Vagina (tissue), 2 donors: ENCODE measurements at regions of chr16 and their contacts with region 1.

Region 1: GRCh38 chr16:49491771-49492761 is 118.5 kb downstream of the C16orf78 start:
- DNase-seq: no peak
- H3K4me3 ChIP-seq: peak overlapping the region; percentile 33
- H3K27ac ChIP-seq: no peak overlapping the region
- H3K4me1 ChIP-seq: peaks cover 13% of the 10 kb centered on the region
- H3K27me3 ChIP-seq: no peaks in the 10 kb centered on the region
- CTCF ChIP-seq: peak; percentile 50 to 94 (median 74)
- POLR2A ChIP-seq: no peak

Region 2: DNA sequence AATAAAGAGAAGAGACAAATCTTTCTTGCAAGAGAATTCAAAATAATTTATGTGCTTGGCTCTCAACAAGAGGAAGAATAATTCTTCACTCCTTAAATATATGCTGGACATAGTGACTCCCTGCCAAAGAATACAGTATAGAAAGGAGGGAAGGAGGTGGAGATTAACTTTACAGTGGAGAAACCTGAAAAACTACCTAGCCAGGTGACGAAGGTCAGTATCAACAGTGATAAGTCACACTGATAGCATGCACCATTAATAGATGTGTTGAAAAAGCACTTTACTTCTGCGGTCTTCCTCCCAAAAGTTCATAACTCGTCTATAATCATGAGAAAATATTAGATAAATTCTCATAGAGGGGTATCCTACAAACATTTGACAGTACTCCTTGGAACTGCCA is 231.8 kb before region 1 on chr16:
- intact Hi-C with region 1: no loop called
- DNase-seq: no peak
- H3K4me3 ChIP-seq: no peak overlapping the region
- H3K27ac ChIP-seq: no peak overlapping the region
- H3K4me1 ChIP-seq: no peaks in the 10 kb centered on the region
- H3K27me3 ChIP-seq: no peaks in the 10 kb centered on the region
- CTCF ChIP-seq: no peak
- POLR2A ChIP-seq: no peak

Region 3: DNA sequence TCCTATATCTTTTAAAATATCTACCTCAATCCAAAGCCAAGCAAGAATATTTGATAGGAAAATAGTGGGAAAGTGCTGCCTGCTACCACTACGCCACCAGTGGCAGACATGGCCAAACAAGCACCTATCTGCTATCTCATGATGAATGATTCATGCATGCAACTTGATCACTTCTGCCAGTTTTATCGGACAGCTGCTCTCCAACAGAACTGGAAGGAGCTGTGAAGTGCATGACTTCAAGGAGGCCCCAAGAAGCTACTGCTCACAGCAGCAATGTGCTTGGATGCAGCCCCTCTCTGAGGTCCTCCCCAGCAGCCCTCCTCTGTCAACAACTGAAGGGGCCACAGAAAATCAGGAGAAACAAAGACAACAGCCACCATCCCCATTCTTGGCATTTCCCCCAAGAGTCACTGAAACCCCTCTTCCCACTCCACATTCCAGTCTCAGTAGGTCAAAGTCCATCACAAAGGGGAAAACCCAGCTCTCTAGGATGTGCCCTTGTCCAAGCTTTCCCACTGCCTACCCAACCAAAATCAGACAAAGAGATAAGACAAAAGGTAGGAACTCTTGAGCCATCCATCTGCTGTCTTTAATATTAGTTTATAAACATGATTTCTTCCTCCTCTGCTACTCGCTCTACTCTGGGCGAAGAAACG is 96.8 kb after region 1 on chr16:
- intact Hi-C with region 1: loop called (anchors 10 kb)
- DNase-seq: no peak
- H3K4me3 ChIP-seq: no peak overlapping the region
- H3K27ac ChIP-seq: no peak overlapping the region
- H3K4me1 ChIP-seq: no peaks in the 10 kb centered on the region
- H3K27me3 ChIP-seq: no peaks in the 10 kb centered on the region
- CTCF ChIP-seq: no peak
- POLR2A ChIP-seq: no peak

Region 4: DNA sequence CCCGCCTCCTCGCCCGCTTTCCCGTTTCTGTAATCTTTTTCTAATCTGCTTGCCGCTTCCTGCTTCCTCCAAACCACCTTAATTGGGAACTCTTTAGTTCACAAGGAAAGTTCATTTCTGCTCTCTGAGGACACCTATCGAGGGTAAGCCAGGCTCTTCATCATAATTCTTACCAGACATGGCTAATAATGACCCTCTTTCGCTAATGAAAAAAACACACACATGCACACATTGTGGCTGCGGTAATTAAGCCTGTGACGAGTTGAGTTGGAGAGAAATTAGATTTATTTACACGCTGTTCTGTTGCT is 263.2 kb after region 1 on chr16:
- intact Hi-C with region 1: loop called (anchors 10 kb)
- DNase-seq: no peak
- H3K4me3 ChIP-seq: peak overlapping the region; percentile 38 to 50
- H3K27ac ChIP-seq: peak overlapping the region; percentile 73
- H3K4me1 ChIP-seq: peaks cover 15% of the 10 kb centered on the region
- H3K27me3 ChIP-seq: no peaks in the 10 kb centered on the region
- CTCF ChIP-seq: peak in 1 of 3 experiments; percentile 33
- POLR2A ChIP-seq: no peak